CD14-positive monocyte (primary cell): ENCODE measurements at regions of chr7 and their contacts with region 1.

Region 1: GRCh38 chr7:149714050-149714909 is 59.1 kb downstream of the ZNF467 start:
- DNase-seq: peak; percentile 71 to 77 (median 76)
- H3K4me3 ChIP-seq: peak overlapping the region; percentile 61 to 85 (median 75)
- H3K4me3 Mint-ChIP-seq: peak overlapping the region; percentile 79 to 88
- H3K27ac ChIP-seq: no peak overlapping the region
- H3K27ac Mint-ChIP-seq: no peak overlapping the region
- H3K4me1 ChIP-seq: peaks cover 15 to 19% of the 10 kb centered on the region in 2 donors
- H3K4me1 Mint-ChIP-seq: peaks cover 22% of the 10 kb centered on the region
- H3K27me3 ChIP-seq: peaks cover 0 to 14% of the 10 kb centered on the region in 2 donors
- H3K27me3 Mint-ChIP-seq: peaks cover 3 to 17% (median 7%) of the 10 kb centered on the region in 3 donors
- CTCF ChIP-seq: no peak

Region 2: DNA sequence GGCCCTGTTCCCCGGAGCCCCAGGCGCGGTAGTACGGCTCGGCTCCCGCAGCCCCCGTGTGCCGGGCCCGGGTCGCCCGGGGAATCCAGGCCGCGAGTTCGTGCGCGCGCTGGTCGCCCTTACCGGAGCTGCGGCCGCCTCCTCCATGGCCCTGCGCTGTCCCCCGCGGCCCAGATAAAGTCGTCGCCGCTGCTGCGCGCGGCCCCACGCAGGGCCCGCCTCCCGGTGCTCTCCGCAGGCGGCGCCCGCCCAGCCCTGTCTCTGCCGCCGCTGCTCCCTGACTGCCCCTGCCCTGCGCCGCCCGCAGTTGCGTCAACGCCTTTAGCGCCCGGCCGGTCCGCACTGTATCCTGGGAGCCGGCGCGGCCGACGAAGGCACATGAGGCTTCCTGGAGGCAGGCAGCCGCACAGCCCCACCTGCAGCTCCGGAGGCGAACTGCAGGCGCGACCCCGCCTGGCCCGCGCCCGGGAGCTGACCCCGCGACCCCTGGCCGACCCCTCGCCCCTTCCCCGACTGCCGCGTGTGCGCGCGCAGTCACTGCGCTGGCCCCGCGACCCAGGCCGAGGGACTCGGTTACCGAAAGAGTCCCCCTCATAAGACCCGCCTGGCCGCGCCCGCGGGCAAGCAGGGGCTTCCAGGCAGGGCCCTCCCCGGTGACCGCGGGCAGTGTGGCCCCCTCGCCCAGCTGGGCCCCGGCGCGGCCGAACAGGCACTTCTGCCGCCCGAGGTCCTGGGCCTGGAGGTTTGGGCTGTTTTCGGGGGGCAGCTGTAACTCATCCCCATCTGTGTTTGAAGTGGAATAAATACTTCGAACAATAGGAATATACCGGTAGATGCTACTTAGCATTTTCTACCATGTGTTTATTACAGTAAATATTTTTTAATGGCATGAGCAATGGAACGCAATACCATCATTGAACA is 89.6 kb before region 1 on chr7:
- intact Hi-C with region 1: no loop called
- DNase-seq: peak; percentile 92 to 93 (median 93)
- H3K4me3 ChIP-seq: peak overlapping the region; percentile 75 to 94 (median 92)
- H3K4me3 Mint-ChIP-seq: peak overlapping the region; percentile 71 to 76
- H3K27ac ChIP-seq: peak overlapping the region in 1 of 2 donors; percentile 73
- H3K27ac Mint-ChIP-seq: peak overlapping the region in 5 of 7 donors; percentile 9 to 86 (median 77)
- H3K4me1 ChIP-seq: peaks cover 33 to 42% of the 10 kb centered on the region in 2 donors
- H3K4me1 Mint-ChIP-seq: peaks cover 47% of the 10 kb centered on the region
- H3K27me3 ChIP-seq: no peaks in the 10 kb centered on the region
- H3K27me3 Mint-ChIP-seq: peaks cover 2 to 10% (median 2%) of the 10 kb centered on the region in 3 donors
- CTCF ChIP-seq: peak; percentile 95

Region 3: DNA sequence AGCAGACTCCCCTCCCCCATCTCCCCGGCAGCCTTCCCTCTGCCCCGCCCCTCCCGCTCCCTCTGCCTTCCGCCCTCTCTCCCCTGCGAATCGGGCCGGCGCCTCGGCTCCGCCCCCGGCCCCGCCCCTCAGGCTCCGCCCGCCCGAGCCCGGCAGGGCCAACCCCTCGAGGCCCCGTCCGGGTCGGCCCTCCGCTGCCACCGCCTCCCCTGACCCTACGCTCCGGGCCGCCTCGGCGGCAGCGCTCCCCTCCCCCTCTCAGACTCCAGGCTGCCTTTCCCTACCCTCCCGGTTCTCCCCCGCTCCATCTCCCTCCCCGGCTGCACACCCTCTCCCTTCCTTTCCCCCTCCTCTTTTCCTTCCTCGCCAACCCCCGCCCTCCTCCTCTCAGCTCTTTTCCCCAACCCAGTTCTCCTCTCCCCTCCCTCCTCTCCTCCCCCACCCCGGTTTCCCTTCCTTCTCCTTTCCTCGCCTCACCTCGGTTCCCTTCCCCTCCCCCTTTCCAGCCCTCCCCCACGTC is 57.5 kb after region 1 on chr7:
- intact Hi-C with region 1: loop called (anchors 5 kb)
- DNase-seq: peak; percentile 81 to 89 (median 82)
- H3K4me3 ChIP-seq: peak overlapping the region; percentile 89 to 98 (median 94)
- H3K4me3 Mint-ChIP-seq: peak overlapping the region; percentile 81 to 85
- H3K27ac ChIP-seq: peak overlapping the region; percentile 36 to 60
- H3K27ac Mint-ChIP-seq: peak overlapping the region; percentile 26 to 92 (median 87)
- H3K4me1 ChIP-seq: peaks cover 44 to 45% of the 10 kb centered on the region in 2 donors
- H3K4me1 Mint-ChIP-seq: peaks cover 40% of the 10 kb centered on the region
- H3K27me3 ChIP-seq: no peaks in the 10 kb centered on the region
- H3K27me3 Mint-ChIP-seq: peaks cover 0 to 5% (median 0%) of the 10 kb centered on the region in 3 donors
- CTCF ChIP-seq: no peak

Region 4: GRCh38 chr7:151143261-151144015 is 1429.2 kb after region 1 on chr7:
- intact Hi-C with region 1: no loop called
- DNase-seq: no peak
- H3K4me3 ChIP-seq: no peak overlapping the region
- H3K4me3 Mint-ChIP-seq: no peak overlapping the region
- H3K27ac ChIP-seq: no peak overlapping the region
- H3K27ac Mint-ChIP-seq: peak overlapping the region in 1 of 7 donors; percentile 66
- H3K4me1 ChIP-seq: no peaks in the 10 kb centered on the region
- H3K4me1 Mint-ChIP-seq: no peaks in the 10 kb centered on the region
- H3K27me3 ChIP-seq: no peaks in the 10 kb centered on the region
- H3K27me3 Mint-ChIP-seq: peaks cover 2 to 9% (median 3%) of the 10 kb centered on the region in 3 donors
- CTCF ChIP-seq: no peak